GM13976 (cell line): ENCODE measurements at regions of chr3 and their contacts with region 1.

Region 1: GRCh38 chr3:61858056-61858455 is 296.7 kb downstream of the PTPRG start:
- DNase-seq: no peak
- CTCF ChIP-seq: peak; percentile 28

Region 2: DNA sequence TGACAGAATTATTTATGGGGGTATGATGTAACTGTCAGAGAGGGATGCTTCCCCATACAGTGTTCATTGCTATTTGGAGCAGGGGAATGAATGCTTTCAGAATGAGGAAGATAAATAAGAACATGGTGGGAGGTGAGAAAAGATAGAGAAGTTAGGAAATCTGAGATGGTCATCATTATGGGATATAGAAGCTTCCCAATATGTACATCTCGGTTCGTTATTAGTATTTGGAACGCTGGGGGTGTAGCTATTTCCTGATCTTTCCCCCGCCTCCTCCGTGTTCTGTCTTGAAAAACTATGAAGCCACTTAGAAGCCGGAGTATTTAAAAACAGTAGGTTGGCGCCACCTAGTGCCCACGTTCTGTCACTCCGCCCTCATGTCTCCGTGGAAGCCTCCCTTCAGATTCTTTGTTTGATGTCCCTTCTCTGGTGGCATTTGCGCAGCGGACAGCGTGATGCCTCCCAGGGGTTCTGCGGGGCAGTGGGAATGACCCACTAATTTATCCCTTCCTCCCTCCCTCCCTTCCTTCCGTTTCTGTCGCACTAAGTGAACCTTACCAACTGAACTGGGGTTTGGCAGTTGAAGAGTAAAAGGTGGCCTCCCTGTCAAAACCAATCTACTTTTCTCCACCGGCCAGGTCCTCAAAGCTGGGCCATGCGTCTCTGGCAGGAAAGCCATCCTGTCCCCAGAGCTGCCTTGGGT is 330.8 kb after region 1 on chr3:
- in situ Hi-C with region 1: loop called (anchors 10 kb)
- DNase-seq: peak; percentile 85
- CTCF ChIP-seq: peak; percentile 78